Activated B cell treated with CpG ODN at 0.5 μM for 24 hours (primary cell): ENCODE measurements at regions of chr6 and their contacts with region 1.

Region 1: DNA sequence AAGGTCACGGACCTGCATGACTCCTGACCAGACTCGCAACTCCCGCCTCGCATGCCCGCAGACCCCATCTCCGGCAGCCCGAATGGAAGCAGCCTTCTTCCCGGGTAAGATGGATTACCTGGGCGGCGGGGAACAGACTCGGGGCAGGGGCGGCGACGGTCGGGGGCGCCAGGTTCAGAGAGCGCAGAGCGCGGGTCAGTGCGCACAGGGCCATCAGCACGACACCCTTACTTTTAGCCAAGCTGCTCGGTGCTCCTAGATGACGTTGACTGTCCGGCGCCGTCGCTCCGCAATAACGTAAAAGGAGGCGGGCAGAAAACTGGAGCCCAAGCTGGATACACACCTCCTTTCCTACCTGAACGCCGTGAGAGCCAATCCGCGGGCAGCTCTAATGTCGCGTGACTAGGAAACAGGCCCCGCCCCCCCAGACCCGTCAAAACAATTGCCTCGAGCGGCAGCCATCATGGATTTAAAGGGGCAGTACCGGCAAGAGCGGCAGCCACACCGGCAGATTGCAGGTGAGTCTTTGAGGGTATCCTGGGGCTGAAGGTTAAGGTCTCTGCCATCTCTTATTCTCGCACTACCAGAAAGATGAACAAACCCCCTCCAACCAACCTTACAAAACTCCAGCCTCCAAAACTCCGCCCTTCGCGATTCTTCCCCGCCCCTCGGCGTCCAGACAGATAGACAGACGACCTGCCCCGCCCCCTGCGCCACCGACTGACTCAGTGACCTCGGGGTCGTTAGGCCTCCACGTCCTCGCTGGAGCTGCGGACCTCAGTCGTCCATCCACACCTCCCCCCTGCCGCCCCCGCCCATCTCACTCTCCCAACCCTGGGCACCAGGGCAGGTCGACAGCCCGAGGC is at the starts of genes KLC4 and MRPL2:
- DNase-seq: peak; percentile 94
- ATAC-seq: peak; percentile 97
- H3K4me3 Mint-ChIP-seq: peak within 1 kb of the TSS; percentile 95
- H3K27ac Mint-ChIP-seq: peak within 1 kb of the TSS; percentile 97
- H3K4me1 Mint-ChIP-seq: peaks cover 38% of the 10 kb centered on the region
- H3K27me3 Mint-ChIP-seq: no peaks in the 10 kb centered on the region
- CTCF ChIP-seq: no peak
- total RNA-seq, gene KLC4: 17.0 and 19.8 TPM in 2 replicates
- total RNA-seq, gene MRPL2: 43.9 and 47.8 TPM in 2 replicates

Region 2: GRCh38 chr6:43075670-43076463 is 16.5 kb after region 1 on chr6 and contains the start of gene PTK7:
- CTCF ChIA-PET with region 1: no interaction called
- POLR2A ChIA-PET with region 1: interaction called, 10 read pairs
- intact Hi-C with region 1: no loop called
- DNase-seq: no peak
- ATAC-seq: peak; percentile 56
- H3K4me3 Mint-ChIP-seq: peak within 1 kb of the TSS; percentile 71
- H3K27ac Mint-ChIP-seq: no peak within 1 kb of the TSS
- H3K4me1 Mint-ChIP-seq: peaks cover 12% of the 10 kb centered on the region
- H3K27me3 Mint-ChIP-seq: peaks cover 15% of the 10 kb centered on the region
- CTCF ChIP-seq: no peak
- total RNA-seq, gene PTK7: 0.66 and 0.82 TPM in 2 replicates

Region 3: GRCh38 chr6:43181942-43182860 is 122.8 kb after region 1 on chr6 and contains the start of gene CUL9:
- CTCF ChIA-PET with region 1: no interaction called
- POLR2A ChIA-PET with region 1: interaction called, 9 read pairs
- intact Hi-C with region 1: loop called (anchors 1 kb)
- DNase-seq: peak; percentile 86
- ATAC-seq: peak; percentile 99
- H3K4me3 Mint-ChIP-seq: peak within 1 kb of the TSS; percentile 94
- H3K27ac Mint-ChIP-seq: peak within 1 kb of the TSS; percentile 90
- H3K4me1 Mint-ChIP-seq: peaks cover 35% of the 10 kb centered on the region
- H3K27me3 Mint-ChIP-seq: no peaks in the 10 kb centered on the region
- CTCF ChIP-seq: no peak
- total RNA-seq, gene CUL9: 69.2 and 70.8 TPM in 2 replicates

Region 4: DNA sequence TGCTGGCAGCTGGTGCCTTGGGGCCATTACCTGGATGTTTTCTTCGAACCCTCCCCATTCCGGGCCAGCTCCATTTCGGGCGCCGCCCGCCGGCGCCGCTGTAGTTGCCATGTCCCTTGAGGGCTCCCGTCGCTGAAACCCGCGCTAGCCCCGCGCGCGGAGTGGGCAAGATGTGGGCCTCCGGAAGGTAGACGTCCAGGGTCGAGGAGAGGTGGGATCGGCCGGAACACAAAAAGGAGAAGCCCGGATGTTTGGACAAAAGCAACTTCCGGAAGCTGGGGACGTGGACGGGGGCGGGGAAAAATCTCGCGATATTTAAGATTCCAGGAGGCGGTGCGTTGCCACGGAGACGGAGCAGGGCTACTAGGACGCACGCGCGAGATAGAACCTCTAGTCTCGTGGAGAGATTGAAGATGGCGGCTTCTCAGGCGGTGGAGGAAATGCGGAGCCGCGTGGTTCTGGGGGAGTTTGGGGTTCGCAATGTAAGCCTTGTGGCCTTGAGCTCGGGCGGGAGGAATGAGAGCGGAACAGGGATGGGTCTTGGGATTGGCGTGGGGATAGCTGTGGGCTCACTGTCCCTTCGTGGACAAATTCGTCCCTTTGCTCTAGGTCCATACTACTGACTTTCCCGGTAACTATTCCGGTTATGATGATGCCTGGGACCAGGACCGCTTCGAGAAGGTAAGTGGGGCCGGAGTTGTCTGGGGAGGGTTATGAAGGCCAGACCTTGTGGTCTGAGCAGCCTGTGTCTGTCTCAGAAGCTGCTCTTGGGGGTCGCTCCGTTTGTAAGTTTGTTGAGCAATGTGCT is 457.5 kb after region 1 on chr6 and contains the starts of genes POLR1C and YIPF3:
- CTCF ChIA-PET with region 1: no interaction called
- POLR2A ChIA-PET with region 1: interaction called, 4 read pairs
- intact Hi-C with region 1: loop called (anchors 1 kb)
- DNase-seq: peak; percentile 87
- ATAC-seq: peak; percentile 94
- H3K4me3 Mint-ChIP-seq: no peak within 1 kb of the TSS
- H3K27ac Mint-ChIP-seq: peak within 1 kb of the TSS; percentile 54
- H3K4me1 Mint-ChIP-seq: peaks cover 29% of the 10 kb centered on the region
- H3K27me3 Mint-ChIP-seq: no peaks in the 10 kb centered on the region
- CTCF ChIP-seq: no peak
- total RNA-seq, gene POLR1C: 67.7 and 75.6 TPM in 2 replicates
- total RNA-seq, gene YIPF3: 51.7 and 59.1 TPM in 2 replicates